ENCODE measurements at regions of chr19 and their contacts with region 1.

Region 1: DNA sequence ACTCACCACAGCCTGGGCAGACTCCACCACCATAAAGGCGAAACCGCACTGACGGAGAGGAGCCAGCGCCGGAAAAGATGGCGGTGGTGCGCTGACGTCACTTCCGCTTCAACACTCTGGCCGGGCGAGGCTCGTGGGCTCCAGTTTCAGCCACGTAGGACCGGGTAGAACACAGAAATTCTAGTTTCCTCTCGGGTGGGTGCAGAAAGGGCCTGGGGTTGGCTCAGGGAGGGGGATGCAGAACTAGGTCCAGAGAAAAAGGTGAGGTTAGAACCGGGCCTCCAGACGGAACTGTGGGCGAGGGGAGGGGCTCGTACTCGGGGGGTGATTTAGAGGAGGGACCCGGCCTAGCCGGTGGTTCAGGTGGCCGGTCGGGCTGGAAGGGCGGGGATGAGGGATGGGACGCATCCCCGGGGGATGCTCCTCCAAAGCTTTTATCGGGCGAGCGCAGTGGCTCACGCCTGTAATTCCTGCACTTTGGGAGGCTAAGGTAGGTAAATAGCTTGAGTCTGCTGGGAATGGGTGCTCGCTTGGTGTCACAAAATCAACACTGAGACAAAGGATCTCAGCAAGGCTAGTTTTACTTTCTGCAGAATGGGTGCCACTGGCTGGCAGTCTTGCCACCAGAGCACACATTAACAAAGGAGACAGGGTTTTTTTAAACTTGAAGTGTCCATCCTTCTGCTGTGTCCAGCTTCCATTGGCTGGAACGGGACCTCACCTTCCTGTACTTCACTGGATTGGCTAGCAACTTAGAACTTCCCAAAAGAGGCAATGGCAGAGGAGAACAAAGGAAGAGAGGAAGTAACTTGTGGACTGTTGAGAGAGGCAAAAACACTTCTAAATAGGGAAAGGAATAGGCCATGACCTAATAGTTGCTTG is at the start of gene ZNF561:
- DNase-seq: peak; percentile 95
- H3K4me3 ChIP-seq: peak within 1 kb of the TSS; percentile 60 to 97 (median 88)
- H3K27ac ChIP-seq: peak within 1 kb of the TSS; percentile 87 to 94 (median 94)
- H3K4me1 ChIP-seq: peaks cover 22 to 66% (median 58%) of the 10 kb centered on the region in 4 donors
- H3K27me3 ChIP-seq: peaks cover 0 to 4% (median 0%) of the 10 kb centered on the region in 4 donors
- CTCF ChIP-seq: peak in 1 of 3 experiments; percentile 24
- EP300 ChIP-seq: no peak
- POLR2A ChIP-seq: no peak
- total RNA-seq, gene ZNF561: 26.8 to 40.3 (median 35.8) TPM

Region 2: DNA sequence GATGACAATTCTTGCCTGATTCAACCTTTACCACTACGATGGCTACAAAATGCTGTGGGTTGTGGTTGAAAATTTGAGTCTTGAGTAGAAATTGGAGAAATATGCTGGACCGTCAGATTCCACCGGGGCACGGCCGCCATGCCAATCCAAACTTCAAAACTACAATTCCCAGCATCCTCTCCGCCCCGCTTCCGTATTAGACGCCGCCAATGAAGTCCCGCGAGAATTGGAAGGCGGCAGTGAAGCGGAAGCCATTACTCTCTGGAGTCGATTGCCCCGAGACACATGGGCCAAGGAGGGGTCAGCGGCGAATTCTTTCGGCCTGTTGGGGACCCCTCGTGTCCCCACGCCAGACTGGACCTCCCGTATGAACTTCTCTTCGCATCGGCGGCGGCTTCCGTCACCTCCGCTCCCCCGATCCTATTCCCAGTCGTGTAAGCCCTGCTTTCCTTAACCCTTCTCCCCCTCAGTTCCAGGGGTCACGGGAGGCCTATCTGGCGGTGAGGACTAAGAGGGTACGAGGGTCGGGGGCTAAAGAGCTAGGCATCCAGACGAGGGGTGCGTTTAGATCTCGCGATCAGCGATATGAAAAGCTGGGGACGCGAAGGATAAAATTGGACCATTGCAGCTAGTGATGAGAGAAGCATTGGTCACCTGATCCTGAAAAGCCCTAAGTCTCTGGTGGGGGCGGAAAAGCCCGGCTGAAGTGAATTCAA is 481.1 kb before region 1 on chr19 and contains the start of gene ZNF317:
- intact Hi-C with region 1: loop called (anchors 10 kb)
- DNase-seq: peak; percentile 96
- H3K4me3 ChIP-seq: peak within 1 kb of the TSS; percentile 71 to 88 (median 78)
- H3K27ac ChIP-seq: peak within 1 kb of the TSS; percentile 88 to 93 (median 89)
- H3K4me1 ChIP-seq: peaks cover 15 to 31% (median 28%) of the 10 kb centered on the region in 4 donors
- H3K27me3 ChIP-seq: no peaks in the 10 kb centered on the region
- CTCF ChIP-seq: peak in 1 of 3 experiments; percentile 5
- EP300 ChIP-seq: no peak
- POLR2A ChIP-seq: peak; percentile 11
- total RNA-seq, gene ZNF317: 17.6 to 24.8 (median 21.5) TPM

Region 3: GRCh38 chr19:9674663-9675357 is 53.4 kb after region 1 on chr19 and contains the start of gene ZNF562:
- intact Hi-C with region 1: loop called (anchors 5 kb)
- DNase-seq: peak; percentile 97
- H3K4me3 ChIP-seq: peak within 1 kb of the TSS; percentile 73 to 92 (median 77)
- H3K27ac ChIP-seq: peak within 1 kb of the TSS; percentile 89 to 95 (median 93)
- H3K4me1 ChIP-seq: peaks cover 12 to 23% (median 13%) of the 10 kb centered on the region in 4 donors
- H3K27me3 ChIP-seq: no peaks in the 10 kb centered on the region
- CTCF ChIP-seq: no peak
- EP300 ChIP-seq: no peak
- POLR2A ChIP-seq: no peak
- total RNA-seq, gene ZNF562: 22.8 to 30.3 (median 27.2) TPM

Region 4: GRCh38 chr19:9741476-9742171 is 120.2 kb after region 1 on chr19:
- intact Hi-C with region 1: no loop called
- DNase-seq: no peak
- H3K4me3 ChIP-seq: no peak overlapping the region
- H3K27ac ChIP-seq: no peak overlapping the region
- H3K4me1 ChIP-seq: no peaks in the 10 kb centered on the region
- H3K27me3 ChIP-seq: no peaks in the 10 kb centered on the region
- CTCF ChIP-seq: no peak
- EP300 ChIP-seq: no peak
- POLR2A ChIP-seq: no peak

Region 5: GRCh38 chr19:9768175-9769112 is 147.0 kb after region 1 on chr19 and contains the start of gene ZNF846:
- intact Hi-C with region 1: loop called (anchors 5 kb)
- DNase-seq: peak; percentile 97
- H3K4me3 ChIP-seq: peak within 1 kb of the TSS; percentile 69 to 76 (median 72)
- H3K27ac ChIP-seq: peak within 1 kb of the TSS; percentile 89 to 96 (median 94)
- H3K4me1 ChIP-seq: peaks cover 9 to 25% (median 22%) of the 10 kb centered on the region in 4 donors
- H3K27me3 ChIP-seq: no peaks in the 10 kb centered on the region
- CTCF ChIP-seq: no peak
- EP300 ChIP-seq: no peak
- POLR2A ChIP-seq: no peak
- total RNA-seq, gene ZNF846: 19.7 to 43.2 (median 22.8) TPM

Region 6: GRCh38 chr19:9789066-9789465 is 167.7 kb after region 1 on chr19:
- intact Hi-C with region 1: loop called (anchors 2 kb)
- DNase-seq: no peak
- H3K4me3 ChIP-seq: no peak overlapping the region
- H3K27ac ChIP-seq: peak overlapping the region; percentile 18 to 97 (median 92)
- H3K4me1 ChIP-seq: peaks cover 12 to 42% (median 34%) of the 10 kb centered on the region in 4 donors
- H3K27me3 ChIP-seq: no peaks in the 10 kb centered on the region
- CTCF ChIP-seq: no peak
- EP300 ChIP-seq: no peak
- POLR2A ChIP-seq: no peak

Measured in esophagus muscularis mucosa (tissue), 4 donors.